RWPE1 (cell line): ENCODE measurements at regions of chr1 and their contacts with region 1.

Region 1: GRCh38 chr1:45669379-45669778 is 17.0 kb downstream of the GPBP1L1 start:
- DNase-seq: no peak
- H3K27ac ChIP-seq: no peak overlapping the region
- CTCF ChIP-seq: no peak

Region 2: DNA sequence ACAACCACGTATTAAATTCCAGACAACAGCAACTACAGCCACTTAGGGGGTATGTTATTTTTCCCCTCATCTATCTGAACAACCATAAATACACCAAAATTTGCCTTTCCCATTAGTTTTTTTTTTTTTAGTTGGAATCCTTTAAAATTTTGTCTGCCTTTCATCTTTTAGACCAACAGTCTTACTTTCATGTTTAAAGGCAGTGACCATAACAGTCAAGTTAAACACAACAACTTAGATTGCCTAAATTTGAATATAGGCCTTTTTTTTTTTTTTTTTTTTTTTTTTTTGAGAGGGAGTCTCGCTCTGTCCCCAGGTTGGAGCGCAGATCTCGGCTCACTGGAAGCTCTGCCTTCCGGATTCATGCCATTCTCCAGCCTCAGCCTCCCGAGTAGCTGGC is 13.6 kb after region 1 on chr1:
- CTCF ChIA-PET with region 1: interaction called, 4 read pairs
- POLR2A ChIA-PET with region 1: interaction called, 12 read pairs
- DNase-seq: no peak
- H3K27ac ChIP-seq: no peak overlapping the region
- CTCF ChIP-seq: no peak

Region 3: GRCh38 chr1:45772971-45773370 is 103.6 kb after region 1 on chr1:
- CTCF ChIA-PET with region 1: no interaction called
- POLR2A ChIA-PET with region 1: no interaction called
- DNase-seq: no peak
- H3K27ac ChIP-seq: no peak overlapping the region
- CTCF ChIP-seq: no peak